ENCODE measurements at regions of chr10 and their contacts with region 1.

Region 1: DNA sequence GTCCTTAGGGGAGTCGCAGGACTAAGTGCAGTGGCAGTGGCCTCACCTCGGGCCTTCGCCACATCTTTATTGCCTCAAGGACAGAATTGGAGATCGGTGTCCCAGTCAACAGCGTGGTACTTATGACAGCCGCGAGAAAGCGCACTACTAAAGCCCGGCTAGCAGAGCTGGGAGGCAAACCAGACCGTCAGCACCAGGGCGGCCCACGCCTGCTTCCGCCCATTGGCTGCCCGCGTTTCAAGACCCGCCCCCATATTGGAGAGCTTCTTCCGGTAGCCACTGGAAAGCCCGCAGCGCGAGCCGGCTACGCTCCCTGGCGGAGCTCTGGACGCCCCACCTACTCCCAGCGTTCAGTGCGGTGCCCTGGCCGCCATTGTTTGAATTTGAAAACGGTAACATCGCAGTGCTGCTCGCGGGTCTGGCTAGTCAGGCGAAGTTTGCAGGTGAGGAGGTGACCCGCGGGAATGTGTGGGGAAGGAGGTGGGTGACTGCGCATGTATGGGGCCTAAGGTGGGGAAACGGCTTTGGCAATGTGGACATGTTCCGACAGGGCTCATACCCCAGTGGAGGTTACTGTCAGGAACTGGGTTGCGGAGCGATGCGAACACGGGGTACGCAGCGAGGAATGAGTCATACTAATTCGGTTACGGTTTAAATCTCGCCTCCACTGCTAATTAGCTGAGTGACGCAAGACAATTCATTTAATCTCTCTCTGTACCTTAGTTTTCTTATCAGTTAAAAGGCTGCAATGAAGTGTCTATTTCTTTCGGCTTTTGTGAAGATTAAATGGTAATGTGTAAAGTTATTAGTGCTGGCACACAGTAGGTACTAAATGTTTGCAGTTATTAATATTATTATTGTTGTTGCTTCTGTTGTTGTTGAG is at the start of gene KIF20B:
- DNase-seq: peak; percentile 84 to 96 (median 94)
- ATAC-seq: peak; percentile 99
- H3K4me3 ChIP-seq: peak within 1 kb of the TSS; percentile 92
- H3K4me3 Mint-ChIP-seq: peak within 1 kb of the TSS; percentile 94 to 100 (median 98)
- H3K27ac ChIP-seq: peak within 1 kb of the TSS; percentile 76
- H3K27ac Mint-ChIP-seq: peak within 1 kb of the TSS; percentile 93 to 99 (median 97)
- H3K4me1 ChIP-seq: peaks cover 8 to 11% of the 10 kb centered on the region in 2 donors
- H3K4me1 Mint-ChIP-seq: peaks cover 22 to 51% (median 41%) of the 10 kb centered on the region in 7 donors
- H3K27me3 ChIP-seq: no peaks in the 10 kb centered on the region
- H3K27me3 Mint-ChIP-seq: no peaks in the 10 kb centered on the region
- total RNA-seq, gene KIF20B: 14.5 to 49.0 (median 19.3) TPM

Region 2: DNA sequence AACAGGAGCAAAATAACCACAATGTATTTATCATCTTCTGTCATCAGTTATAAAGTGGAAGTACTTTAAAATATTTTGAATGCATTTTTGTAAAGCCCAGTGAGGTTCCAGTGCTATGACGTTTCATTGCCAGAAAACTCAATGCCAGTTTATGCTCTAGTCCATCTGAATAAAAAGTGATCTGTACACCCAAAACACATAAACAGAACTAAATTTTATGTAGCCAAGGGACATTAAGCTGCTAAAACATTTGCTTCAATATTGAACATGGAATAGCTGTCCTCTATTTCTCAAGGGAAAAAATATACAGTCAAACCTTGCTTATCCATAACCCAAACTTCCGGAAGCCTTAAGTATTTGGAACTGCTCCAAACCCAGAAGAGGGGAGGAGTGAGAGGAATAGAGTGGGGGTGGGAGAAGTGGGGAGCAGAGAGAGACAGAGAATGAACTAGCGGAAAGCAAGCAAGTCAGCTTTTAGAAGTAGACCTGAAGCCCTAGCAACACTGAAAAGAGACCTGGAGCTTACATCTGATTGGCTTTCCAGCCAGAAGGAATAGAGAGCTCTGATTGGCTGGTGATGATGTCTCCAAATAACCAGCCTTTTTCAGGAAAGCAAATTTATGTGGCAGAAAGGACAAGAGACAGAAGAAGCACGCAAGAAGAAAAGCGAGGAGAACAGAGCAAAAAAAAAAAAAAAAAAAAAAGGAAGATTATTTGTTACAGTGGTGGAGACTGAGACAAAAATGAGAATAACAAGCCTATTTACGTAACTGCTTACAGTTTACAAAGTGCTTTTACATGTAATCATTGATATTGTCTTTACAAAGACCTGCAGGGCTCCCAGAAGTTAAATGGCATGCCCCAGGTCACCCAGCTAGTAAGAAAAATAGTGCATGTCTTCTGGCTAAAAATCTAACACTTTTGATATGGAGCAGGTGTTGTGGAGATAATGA is 1314.4 kb before region 1 on chr10:
- CTCF ChIA-PET with region 1: no interaction called
- POLR2A ChIA-PET with region 1: no interaction called
- intact Hi-C with region 1: loop called in 1 of 2 experiments (anchors 10 kb)
- DNase-seq: peak in 7 of 9 donors; percentile 45 to 66 (median 54)
- ATAC-seq: peak; percentile 57
- H3K4me3 ChIP-seq: peak overlapping the region; percentile 45
- H3K4me3 Mint-ChIP-seq: no peak overlapping the region
- H3K27ac ChIP-seq: peak overlapping the region; percentile 82
- H3K27ac Mint-ChIP-seq: no peak overlapping the region
- H3K4me1 ChIP-seq: peaks cover 44 to 69% of the 10 kb centered on the region in 2 donors
- H3K4me1 Mint-ChIP-seq: peaks cover 6 to 41% (median 37%) of the 10 kb centered on the region in 7 donors
- H3K27me3 ChIP-seq: no peaks in the 10 kb centered on the region
- H3K27me3 Mint-ChIP-seq: no peaks in the 10 kb centered on the region

Region 3: GRCh38 chr10:89079961-89080360 is 621.5 kb before region 1 on chr10:
- CTCF ChIA-PET with region 1: no interaction called
- POLR2A ChIA-PET with region 1: no interaction called
- intact Hi-C with region 1: loop called in 1 of 2 experiments (anchors 5 kb)
- DNase-seq: no peak
- ATAC-seq: no peak
- H3K4me3 ChIP-seq: no peak overlapping the region
- H3K4me3 Mint-ChIP-seq: no peak overlapping the region
- H3K27ac ChIP-seq: no peak overlapping the region
- H3K27ac Mint-ChIP-seq: peak overlapping the region in 1 of 9 donors; percentile 59
- H3K4me1 ChIP-seq: peaks cover 6 to 9% of the 10 kb centered on the region in 2 donors
- H3K4me1 Mint-ChIP-seq: peaks cover 0 to 30% (median 13%) of the 10 kb centered on the region in 7 donors
- H3K27me3 ChIP-seq: no peaks in the 10 kb centered on the region
- H3K27me3 Mint-ChIP-seq: peaks cover 0 to 2% (median 0%) of the 10 kb centered on the region in 5 donors

Region 4: GRCh38 chr10:89414146-89414878 is 287.2 kb before region 1 on chr10 and contains the start of gene IFIT5:
- CTCF ChIA-PET with region 1: no interaction called
- POLR2A ChIA-PET with region 1: interaction called, 7 read pairs
- intact Hi-C with region 1: loop called (anchors 1 to 2 kb)
- DNase-seq: peak; percentile 62 to 83 (median 76)
- ATAC-seq: peak; percentile 88
- H3K4me3 ChIP-seq: peak within 1 kb of the TSS; percentile 77
- H3K4me3 Mint-ChIP-seq: peak within 1 kb of the TSS; percentile 90 to 100 (median 96)
- H3K27ac ChIP-seq: peak within 1 kb of the TSS; percentile 94
- H3K27ac Mint-ChIP-seq: peak within 1 kb of the TSS; percentile 96 to 100 (median 98)
- H3K4me1 ChIP-seq: peaks cover 21% of the 10 kb centered on the region in 2 donors
- H3K4me1 Mint-ChIP-seq: peaks cover 26 to 75% (median 65%) of the 10 kb centered on the region in 7 donors
- H3K27me3 ChIP-seq: no peaks in the 10 kb centered on the region
- H3K27me3 Mint-ChIP-seq: no peaks in the 10 kb centered on the region
- total RNA-seq, gene IFIT5: 13.1 to 34.0 (median 24.8) TPM

Region 5: GRCh38 chr10:89738551-89739209 is 37.2 kb after region 1 on chr10:
- CTCF ChIA-PET with region 1: no interaction called
- POLR2A ChIA-PET with region 1: interaction called, 3 read pairs
- intact Hi-C with region 1: loop called in 1 of 2 experiments (anchors 2 kb)
- DNase-seq: no peak
- ATAC-seq: peak; percentile 54
- H3K4me3 ChIP-seq: no peak overlapping the region
- H3K4me3 Mint-ChIP-seq: peak overlapping the region in 1 of 10 donors; percentile 77
- H3K27ac ChIP-seq: no peak overlapping the region
- H3K27ac Mint-ChIP-seq: peak overlapping the region in 1 of 9 donors; percentile 90
- H3K4me1 ChIP-seq: no peaks in the 10 kb centered on the region
- H3K4me1 Mint-ChIP-seq: peaks cover 0 to 47% (median 0%) of the 10 kb centered on the region in 7 donors
- H3K27me3 ChIP-seq: no peaks in the 10 kb centered on the region
- H3K27me3 Mint-ChIP-seq: no peaks in the 10 kb centered on the region

Region 6: DNA sequence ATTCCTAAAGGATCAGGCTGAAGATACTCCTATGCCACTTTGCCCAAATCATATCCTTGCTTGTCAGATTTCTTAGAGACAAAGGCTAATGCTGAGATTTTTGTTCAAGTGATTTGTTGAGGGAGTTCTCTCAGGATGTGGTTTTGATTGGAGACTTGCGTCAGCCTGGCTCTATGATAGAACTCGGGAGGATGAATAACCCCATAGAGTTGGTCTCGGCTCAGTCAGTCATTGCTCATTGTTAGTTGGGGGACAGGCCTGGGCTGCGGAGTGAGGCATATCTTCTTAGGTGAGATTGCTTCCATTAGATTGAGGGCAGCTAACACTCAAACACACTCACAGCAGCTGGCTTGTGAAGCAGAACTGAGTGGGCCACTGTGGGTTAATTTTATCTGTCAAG is 203.3 kb after region 1 on chr10:
- CTCF ChIA-PET with region 1: no interaction called
- POLR2A ChIA-PET with region 1: no interaction called
- intact Hi-C with region 1: no loop called
- DNase-seq: no peak
- ATAC-seq: no peak
- H3K4me3 ChIP-seq: no peak overlapping the region
- H3K4me3 Mint-ChIP-seq: no peak overlapping the region
- H3K27ac ChIP-seq: no peak overlapping the region
- H3K27ac Mint-ChIP-seq: no peak overlapping the region
- H3K4me1 ChIP-seq: no peaks in the 10 kb centered on the region
- H3K4me1 Mint-ChIP-seq: no peaks in the 10 kb centered on the region
- H3K27me3 ChIP-seq: peaks cover 0 to 4% of the 10 kb centered on the region in 2 donors
- H3K27me3 Mint-ChIP-seq: peaks cover 2 to 34% (median 23%) of the 10 kb centered on the region in 5 donors

Region 7: GRCh38 chr10:90871766-90872647 is 1170.5 kb after region 1 on chr10 and contains the start of gene RPP30:
- CTCF ChIA-PET with region 1: no interaction called
- POLR2A ChIA-PET with region 1: no interaction called
- intact Hi-C with region 1: loop called (anchors 1 to 5 kb)
- DNase-seq: peak; percentile 71 to 83 (median 77)
- ATAC-seq: peak; percentile 99
- H3K4me3 ChIP-seq: peak within 1 kb of the TSS; percentile 83
- H3K4me3 Mint-ChIP-seq: peak within 1 kb of the TSS; percentile 94 to 99 (median 98)
- H3K27ac ChIP-seq: peak within 1 kb of the TSS; percentile 71
- H3K27ac Mint-ChIP-seq: peak within 1 kb of the TSS; percentile 73 to 95 (median 88)
- H3K4me1 ChIP-seq: peaks cover 14 to 23% of the 10 kb centered on the region in 2 donors
- H3K4me1 Mint-ChIP-seq: peaks cover 24 to 53% (median 37%) of the 10 kb centered on the region in 7 donors
- H3K27me3 ChIP-seq: no peaks in the 10 kb centered on the region
- H3K27me3 Mint-ChIP-seq: peaks cover 22 to 40% (median 34%) of the 10 kb centered on the region in 5 donors
- total RNA-seq, gene RPP30: 24.1 to 45.6 (median 38.0) TPM

Region 8: DNA sequence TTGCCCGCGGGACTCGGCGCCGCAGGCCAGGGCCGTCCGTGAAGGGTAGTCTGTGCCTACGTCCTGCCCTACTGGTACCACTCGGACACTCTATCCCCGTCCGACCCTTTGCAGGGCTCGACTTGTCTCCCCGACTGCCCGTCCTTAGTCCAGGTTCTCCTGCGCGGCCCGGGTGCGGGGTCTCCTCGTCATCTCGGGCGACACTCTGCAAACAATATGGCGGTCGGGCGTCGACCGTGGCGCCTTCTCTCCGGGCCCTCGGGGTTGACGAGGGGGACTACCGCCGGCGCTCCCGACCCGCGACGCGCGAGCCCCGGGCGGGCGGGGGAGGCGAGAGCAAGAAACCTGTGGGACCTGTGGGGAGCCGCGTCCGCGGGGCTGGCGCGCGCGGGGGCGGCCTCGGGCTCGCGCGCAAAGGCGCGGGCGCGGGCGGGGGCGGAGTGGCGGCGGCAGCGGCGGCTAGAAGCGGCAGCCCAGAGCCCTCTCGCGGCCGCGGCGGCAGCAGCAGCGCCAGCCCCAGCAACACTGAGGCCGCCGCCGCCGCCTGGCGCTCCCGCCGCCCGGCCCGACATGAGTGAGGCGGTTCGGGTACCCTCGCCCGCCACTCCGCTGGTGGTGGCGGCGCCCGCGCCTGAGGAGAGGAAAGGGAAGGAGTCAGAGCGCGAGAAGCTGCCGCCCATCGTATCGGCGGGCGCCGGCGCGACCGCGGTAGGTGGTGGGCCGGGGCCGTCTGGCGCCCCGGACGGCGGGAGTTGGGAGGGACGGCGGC is 1708.6 kb after region 1 on chr10 and contains the start of gene HECTD2:
- CTCF ChIA-PET with region 1: no interaction called
- POLR2A ChIA-PET with region 1: no interaction called
- intact Hi-C with region 1: loop called in 1 of 2 experiments (anchors 5 kb)
- DNase-seq: peak; percentile 76 to 89 (median 86)
- ATAC-seq: peak; percentile 93
- H3K4me3 ChIP-seq: peak within 1 kb of the TSS; percentile 83
- H3K4me3 Mint-ChIP-seq: peak within 1 kb of the TSS; percentile 75 to 93 (median 90)
- H3K27ac ChIP-seq: peak within 1 kb of the TSS; percentile 88
- H3K27ac Mint-ChIP-seq: peak within 1 kb of the TSS; percentile 81 to 96 (median 91)
- H3K4me1 ChIP-seq: peaks cover 8 to 17% of the 10 kb centered on the region in 2 donors
- H3K4me1 Mint-ChIP-seq: peaks cover 8 to 18% (median 13%) of the 10 kb centered on the region in 7 donors
- H3K27me3 ChIP-seq: no peaks in the 10 kb centered on the region
- H3K27me3 Mint-ChIP-seq: peaks cover 0 to 27% (median 0%) of the 10 kb centered on the region in 5 donors
- total RNA-seq, gene HECTD2: 1.1 to 4.6 (median 2.0) TPM